Aorta (tissue), 5 donors: ENCODE measurements at regions of chr13 and their contacts with region 1.

Region 1: GRCh38 chr13:23579072-23579895 is 9.1 kb downstream of the TNFRSF19 start:
- DNase-seq: peak; percentile 92 to 97
- ATAC-seq: peak; percentile 99
- H3K4me3 ChIP-seq: peak overlapping the region; percentile 24 to 55
- H3K27ac ChIP-seq: no peak overlapping the region
- H3K4me1 ChIP-seq: no peaks in the 10 kb centered on the region
- H3K27me3 ChIP-seq: no peaks in the 10 kb centered on the region

Region 2: DNA sequence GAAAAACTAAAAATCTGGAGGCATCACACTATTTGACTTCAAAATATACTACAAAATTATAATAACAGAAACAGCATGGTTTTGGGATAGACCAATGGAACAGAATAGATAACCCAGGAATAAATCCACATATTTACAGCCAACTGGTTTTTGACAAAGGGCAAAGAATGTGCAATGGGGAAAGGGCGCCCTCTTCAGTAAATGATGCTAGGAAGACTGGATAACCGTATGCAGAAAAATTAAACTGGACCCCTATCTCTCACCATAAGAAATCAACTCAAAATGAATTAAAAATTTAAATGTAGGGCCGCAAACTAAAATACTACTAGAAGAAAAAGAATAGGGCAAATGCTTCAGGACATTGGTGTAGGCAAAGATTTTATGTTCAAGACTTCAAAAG is 839.0 kb before region 1 on chr13:
- intact Hi-C with region 1: no loop called
- DNase-seq: no peak
- ATAC-seq: no peak
- H3K4me3 ChIP-seq: no peak overlapping the region
- H3K27ac ChIP-seq: no peak overlapping the region
- H3K4me1 ChIP-seq: no peaks in the 10 kb centered on the region
- H3K27me3 ChIP-seq: no peaks in the 10 kb centered on the region

Region 3: GRCh38 chr13:23418776-23419683 is 160.3 kb before region 1 on chr13:
- intact Hi-C with region 1: no loop called
- DNase-seq: no peak
- ATAC-seq: peak; percentile 60
- H3K4me3 ChIP-seq: no peak overlapping the region
- H3K27ac ChIP-seq: no peak overlapping the region
- H3K4me1 ChIP-seq: no peaks in the 10 kb centered on the region
- H3K27me3 ChIP-seq: no peaks in the 10 kb centered on the region

Region 4: DNA sequence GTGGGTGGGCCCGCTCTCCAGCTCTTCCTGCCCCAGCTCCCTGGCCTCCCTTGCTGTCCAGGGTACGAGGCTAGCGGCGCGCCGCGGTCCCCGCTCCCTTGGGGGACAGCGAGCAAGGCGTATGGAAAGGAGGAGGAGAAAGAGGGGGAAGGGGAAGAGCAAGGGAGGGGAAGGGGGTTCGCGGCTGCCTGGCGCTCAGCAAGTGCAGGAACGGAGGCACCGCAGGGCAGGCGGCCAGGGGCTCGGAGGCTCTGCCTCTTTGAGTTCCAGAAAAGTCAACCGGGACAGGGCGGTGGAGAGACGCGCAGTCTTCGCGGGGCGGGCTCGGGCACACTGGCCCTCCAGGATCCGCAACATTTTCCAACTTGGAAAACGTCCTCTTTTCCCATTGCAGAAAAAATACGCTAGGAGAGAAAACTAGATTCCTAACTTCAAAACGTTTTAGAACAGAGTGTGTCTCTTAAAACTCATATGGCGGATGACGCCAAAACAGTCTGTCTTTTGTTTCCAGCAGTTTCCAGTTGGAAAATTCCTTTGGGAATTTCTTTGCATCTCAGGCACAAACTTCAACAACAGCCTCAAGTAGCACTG is 32.2 kb before region 1 on chr13:
- intact Hi-C with region 1: no loop called
- DNase-seq: peak; percentile 50 to 77
- ATAC-seq: peak; percentile 63
- H3K4me3 ChIP-seq: peak overlapping the region; percentile 6 to 60
- H3K27ac ChIP-seq: no peak overlapping the region
- H3K4me1 ChIP-seq: no peaks in the 10 kb centered on the region
- H3K27me3 ChIP-seq: no peaks in the 10 kb centered on the region

Region 5: GRCh38 chr13:23794267-23795161 is 215.2 kb after region 1 on chr13:
- intact Hi-C with region 1: loop called in 1 of 2 experiments (anchors 10 kb)
- DNase-seq: no peak
- ATAC-seq: no peak
- H3K4me3 ChIP-seq: no peak overlapping the region
- H3K27ac ChIP-seq: no peak overlapping the region
- H3K4me1 ChIP-seq: no peaks in the 10 kb centered on the region
- H3K27me3 ChIP-seq: no peaks in the 10 kb centered on the region

Region 6: DNA sequence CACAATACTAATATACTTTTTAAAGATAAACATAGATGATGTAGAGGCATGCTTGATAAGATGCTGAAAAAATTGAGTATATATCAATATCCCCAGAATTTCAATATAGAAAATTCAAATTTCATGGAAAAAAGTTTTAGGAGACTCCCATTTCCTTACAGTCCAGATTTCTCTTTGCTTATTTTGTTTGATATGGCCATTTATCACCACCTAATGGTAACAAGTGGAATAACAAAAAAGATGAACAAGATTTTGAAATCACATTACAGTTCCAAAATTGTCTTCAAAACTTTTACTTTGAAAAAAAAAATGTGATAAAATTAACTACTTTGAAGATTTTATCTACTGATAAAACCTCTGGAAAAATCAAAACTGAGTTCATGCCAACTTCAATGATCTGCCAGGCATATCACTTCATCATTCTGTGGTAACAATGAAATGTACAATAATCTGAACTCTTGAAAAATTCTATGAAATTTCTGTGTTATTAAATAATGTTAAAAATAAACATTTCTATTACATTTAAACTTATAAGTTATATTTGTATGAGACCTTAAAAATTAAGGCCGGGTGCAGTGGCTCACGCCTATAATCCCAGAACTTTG is 292.4 kb after region 1 on chr13:
- intact Hi-C with region 1: loop called in 1 of 2 experiments (anchors 10 kb)
- DNase-seq: no peak
- ATAC-seq: no peak
- H3K4me3 ChIP-seq: no peak overlapping the region
- H3K27ac ChIP-seq: no peak overlapping the region
- H3K4me1 ChIP-seq: no peaks in the 10 kb centered on the region
- H3K27me3 ChIP-seq: no peaks in the 10 kb centered on the region